ENCODE measurements at regions of chr17 and their contacts with region 1.

Region 1: GRCh38 chr17:76182016-76182764 is 41.1 kb upstream of the FOXJ1 start:
- DNase-seq: peak; percentile 83
- CTCF ChIP-seq: peak; percentile 91

Region 2: GRCh38 chr17:76147211-76148014 is 34.8 kb before region 1 on chr17:
- CTCF ChIA-PET with region 1: interaction called, 16 read pairs
- POLR2A ChIA-PET with region 1: no interaction called
- DNase-seq: no peak
- CTCF ChIP-seq: no peak

Region 3: GRCh38 chr17:76153640-76154039 is 28.6 kb before region 1 on chr17:
- CTCF ChIA-PET with region 1: interaction called, 12 read pairs
- POLR2A ChIA-PET with region 1: no interaction called
- DNase-seq: no peak
- CTCF ChIP-seq: no peak

Region 4: DNA sequence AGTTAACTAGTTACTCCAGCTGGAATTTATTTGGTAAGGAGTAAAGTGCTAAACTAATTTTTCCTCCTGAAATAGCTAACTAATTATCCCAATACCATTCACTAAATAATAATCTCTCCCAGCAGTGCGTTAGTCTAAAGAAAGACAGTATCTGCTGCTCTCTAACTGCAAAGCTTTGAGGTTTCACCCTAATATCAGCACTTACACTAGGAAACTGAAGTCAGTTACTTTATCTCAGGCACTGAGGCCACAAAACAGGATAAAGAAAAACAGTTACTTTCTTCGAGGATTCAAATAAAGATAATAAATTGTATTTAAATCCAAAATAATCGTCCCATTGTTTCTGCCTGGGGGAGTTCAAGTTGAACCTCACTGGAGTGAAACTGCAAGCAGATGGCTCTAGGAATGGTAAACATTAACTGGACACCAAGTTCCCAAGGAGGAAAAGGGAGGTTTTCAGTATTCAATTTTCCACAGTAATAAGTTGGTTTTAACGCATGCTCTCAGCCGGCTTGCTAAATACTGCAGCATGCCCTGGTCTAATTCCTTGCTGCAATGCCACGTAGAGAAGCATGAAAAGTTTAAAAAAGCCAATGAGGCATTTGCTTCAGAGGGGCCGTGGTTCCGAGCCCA is 21.2 kb before region 1 on chr17:
- CTCF ChIA-PET with region 1: interaction called, 76 read pairs
- POLR2A ChIA-PET with region 1: no interaction called
- DNase-seq: no peak
- CTCF ChIP-seq: no peak

Region 5: GRCh38 chr17:76166168-76166567 is 16.0 kb before region 1 on chr17:
- CTCF ChIA-PET with region 1: interaction called, 76 read pairs
- POLR2A ChIA-PET with region 1: no interaction called
- DNase-seq: no peak
- CTCF ChIP-seq: no peak

Region 6: GRCh38 chr17:76246080-76247066 is 64.2 kb after region 1 on chr17:
- CTCF ChIA-PET with region 1: interaction called, 11 read pairs
- POLR2A ChIA-PET with region 1: no interaction called
- DNase-seq: peak; percentile 87
- CTCF ChIP-seq: no peak